ENCODE measurements at regions of chrX and their contacts with region 1.

Region 1: DNA sequence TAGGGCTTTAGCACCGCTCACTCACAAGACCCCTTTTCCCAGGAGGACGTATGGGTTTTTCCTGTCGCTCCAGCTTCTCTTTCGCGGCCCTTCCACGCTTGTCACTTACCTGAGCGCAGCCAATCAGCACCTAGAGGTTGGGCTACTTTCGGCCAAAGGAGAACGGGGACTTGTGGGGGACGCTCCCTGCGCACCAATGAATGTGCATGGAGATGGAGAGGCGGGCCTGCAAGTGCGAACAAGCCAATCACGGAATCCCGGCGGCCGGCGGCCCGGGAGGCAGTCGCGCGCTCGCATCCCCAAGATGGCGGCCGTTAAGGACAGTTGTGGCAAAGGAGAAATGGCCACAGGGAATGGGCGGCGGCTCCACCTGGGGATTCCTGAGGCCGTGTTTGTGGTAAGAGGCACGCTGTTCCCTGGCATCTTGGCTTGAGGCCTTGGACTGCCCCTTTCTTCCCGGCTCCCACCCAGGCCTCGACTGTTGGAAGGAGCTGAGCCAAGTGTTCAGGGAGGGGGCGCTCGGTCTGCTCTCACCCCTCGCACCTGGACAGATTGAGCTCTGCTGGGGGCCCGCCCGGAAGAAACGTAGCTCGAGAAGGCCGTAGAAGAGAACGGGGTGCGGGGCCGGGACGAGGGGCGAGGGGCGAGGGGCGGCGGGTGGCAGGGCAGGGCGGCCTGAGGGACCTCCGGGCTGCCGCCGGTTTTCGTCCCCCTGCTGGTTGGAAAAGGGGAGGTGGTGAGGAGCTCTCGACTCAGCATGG is at the start of gene VBP1:
- DNase-seq: peak; percentile 92
- ATAC-seq: peak; percentile 99
- H3K4me3 Mint-ChIP-seq: peak within 1 kb of the TSS; percentile 98
- H3K27ac Mint-ChIP-seq: peak within 1 kb of the TSS; percentile 92
- H3K4me1 Mint-ChIP-seq: peaks cover 19% of the 10 kb centered on the region
- H3K27me3 Mint-ChIP-seq: no peaks in the 10 kb centered on the region
- total RNA-seq, gene VBP1: 72.3 to 86.4 TPM

Region 2: DNA sequence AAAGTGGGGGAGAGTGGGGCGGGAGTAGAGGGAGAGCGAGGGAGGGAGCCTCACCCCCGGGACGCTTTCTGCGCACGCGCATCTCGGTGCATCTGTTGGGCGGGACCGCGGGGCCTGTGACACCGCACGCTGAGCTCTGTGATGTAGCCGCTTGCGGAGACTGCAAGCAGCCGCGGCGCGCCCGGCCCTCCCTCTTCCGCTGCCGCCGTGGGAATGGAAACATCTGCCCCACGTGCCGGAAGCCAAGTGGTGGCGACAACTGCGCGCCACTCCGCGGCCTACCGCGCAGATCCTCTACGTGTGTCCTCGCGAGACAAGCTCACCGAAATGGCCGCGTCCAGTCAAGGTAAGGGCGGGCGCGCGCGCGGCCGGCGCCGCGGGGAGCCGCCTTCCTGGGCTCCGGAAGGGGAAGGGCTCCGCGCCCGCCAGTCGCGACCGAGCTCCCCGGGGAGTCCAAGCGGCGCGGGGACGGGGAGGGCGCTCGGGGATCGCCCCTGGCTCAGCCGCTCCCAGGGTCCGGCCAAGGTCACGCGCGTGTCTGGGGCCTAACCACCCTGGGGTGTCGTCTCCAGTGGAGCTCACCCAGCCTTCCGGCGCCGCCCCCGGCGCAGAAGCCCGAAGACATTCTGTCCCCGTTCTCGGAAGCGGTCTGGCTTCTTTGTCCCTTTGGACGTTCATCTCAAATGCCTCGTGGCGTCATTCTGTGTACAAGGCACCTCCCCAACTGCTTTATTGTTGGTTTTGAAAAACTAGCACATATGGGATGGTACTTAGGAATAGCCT is 189.4 kb before region 1 on chrX and contains the start of gene FUNDC2:
- CTCF ChIA-PET with region 1: no interaction called
- POLR2A ChIA-PET with region 1: no interaction called
- intact Hi-C with region 1: loop called in 1 of 2 experiments (anchors 2 kb)
- DNase-seq: peak; percentile 94
- ATAC-seq: peak; percentile 86
- H3K4me3 Mint-ChIP-seq: peak within 1 kb of the TSS; percentile 86
- H3K27ac Mint-ChIP-seq: peak within 1 kb of the TSS; percentile 93
- H3K4me1 Mint-ChIP-seq: peaks cover 21% of the 10 kb centered on the region
- H3K27me3 Mint-ChIP-seq: no peaks in the 10 kb centered on the region
- total RNA-seq, gene FUNDC2: 83.7 to 86.9 TPM

Region 3: DNA sequence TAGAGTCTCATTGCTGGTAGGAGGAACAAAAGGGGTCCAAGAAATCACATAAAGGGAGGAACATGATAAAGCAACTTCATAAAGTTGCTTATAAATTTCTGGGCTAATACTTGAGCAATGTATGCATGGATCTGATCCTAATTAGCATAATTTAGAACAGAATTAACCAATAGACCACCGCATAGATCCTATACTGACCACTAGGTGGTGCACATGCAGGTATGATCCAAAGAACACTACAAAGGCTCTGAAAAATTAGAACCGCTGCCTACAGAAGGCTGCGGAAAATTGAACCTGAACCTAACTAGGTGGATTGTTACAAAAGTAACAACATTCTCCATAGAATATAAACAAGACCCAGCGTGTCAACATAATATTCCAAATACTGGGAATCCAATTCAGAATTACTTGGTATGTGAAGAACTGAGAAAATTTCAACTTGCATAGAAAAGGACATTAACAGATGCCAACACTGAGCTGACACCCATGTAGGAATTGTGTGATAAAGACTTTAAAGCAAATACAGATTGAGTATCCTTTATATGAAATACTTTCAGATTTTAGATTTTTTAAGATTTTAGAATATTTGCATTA is 121.8 kb before region 1 on chrX:
- CTCF ChIA-PET with region 1: interaction called, 3 read pairs
- POLR2A ChIA-PET with region 1: interaction called, 4 read pairs
- intact Hi-C with region 1: loop called in 1 of 2 experiments (anchors 5 kb)
- DNase-seq: peak; percentile 26
- ATAC-seq: peak; percentile 73
- H3K4me3 Mint-ChIP-seq: no peak overlapping the region
- H3K27ac Mint-ChIP-seq: no peak overlapping the region
- H3K4me1 Mint-ChIP-seq: peaks cover 2% of the 10 kb centered on the region
- H3K27me3 Mint-ChIP-seq: no peaks in the 10 kb centered on the region

Region 4: DNA sequence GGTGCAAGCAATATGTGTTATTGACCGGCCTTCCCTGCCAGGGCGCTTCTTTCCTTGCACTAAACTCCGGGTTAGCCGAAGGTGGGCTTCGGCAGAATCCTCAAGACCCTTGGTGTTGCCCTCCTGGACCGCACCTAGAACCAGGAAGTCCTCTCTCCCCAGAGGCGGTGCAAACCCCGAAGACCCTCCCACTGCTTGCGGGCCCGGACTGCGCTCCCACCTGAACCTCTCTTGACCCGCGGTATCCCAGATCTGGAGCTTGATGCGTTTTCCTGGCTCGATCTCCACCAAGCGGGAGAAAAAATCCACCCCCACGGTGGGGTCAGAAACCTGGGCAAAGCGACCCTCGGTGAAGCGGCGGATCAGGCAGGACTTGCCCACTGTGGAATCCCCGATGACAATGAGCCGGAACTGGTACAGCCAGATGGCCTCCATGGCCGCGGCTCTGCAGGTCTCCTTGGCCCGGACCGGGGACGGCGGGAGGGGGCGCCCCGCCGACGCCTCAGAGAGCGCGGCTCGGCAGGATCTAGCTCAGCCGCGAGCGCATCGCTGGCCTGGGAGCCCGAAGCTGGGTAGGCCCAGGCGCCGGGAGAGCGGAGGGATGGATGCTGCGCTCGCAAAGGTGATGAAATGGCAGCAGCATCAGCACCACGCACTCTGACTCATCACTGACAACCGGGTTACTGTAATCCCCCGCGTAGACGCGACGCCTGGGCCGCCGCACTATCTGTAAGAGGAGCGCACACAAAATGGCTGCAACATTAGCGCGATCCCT is 47.7 kb after region 1 on chrX and contains the start of gene RAB39B:
- CTCF ChIA-PET with region 1: no interaction called
- POLR2A ChIA-PET with region 1: no interaction called
- intact Hi-C with region 1: loop called (anchors 1 to 5 kb)
- DNase-seq: peak; percentile 88
- ATAC-seq: peak; percentile 90
- H3K4me3 Mint-ChIP-seq: peak within 1 kb of the TSS; percentile 89
- H3K27ac Mint-ChIP-seq: peak within 1 kb of the TSS; percentile 94
- H3K4me1 Mint-ChIP-seq: peaks cover 21% of the 10 kb centered on the region
- H3K27me3 Mint-ChIP-seq: no peaks in the 10 kb centered on the region
- total RNA-seq, gene RAB39B: 16.4 to 17.2 TPM

Region 5: GRCh38 chrX:155881158-155881993 is 665.0 kb after region 1 on chrX and contains the start of gene VAMP7:
- CTCF ChIA-PET with region 1: no interaction called
- POLR2A ChIA-PET with region 1: no interaction called
- intact Hi-C with region 1: loop called in 1 of 2 experiments (anchors 2 kb)
- DNase-seq: peak; percentile 89
- ATAC-seq: peak; percentile 99
- H3K4me3 Mint-ChIP-seq: peak within 1 kb of the TSS; percentile 90
- H3K27ac Mint-ChIP-seq: peak within 1 kb of the TSS; percentile 88
- H3K4me1 Mint-ChIP-seq: peaks cover 25% of the 10 kb centered on the region
- H3K27me3 Mint-ChIP-seq: no peaks in the 10 kb centered on the region
- total RNA-seq, gene VAMP7: 34.9 to 37.2 TPM